Posterior vena cava (tissue), 2 donors: ENCODE measurements at regions of chr1 and their contacts with region 1.

Region 1: GRCh38 chr1:154558575-154559465 is at the start of gene UBE2Q1:
- DNase-seq: peak; percentile 100
- total RNA-seq, gene UBE2Q1: 44.8 to 45.4 TPM

Region 2: DNA sequence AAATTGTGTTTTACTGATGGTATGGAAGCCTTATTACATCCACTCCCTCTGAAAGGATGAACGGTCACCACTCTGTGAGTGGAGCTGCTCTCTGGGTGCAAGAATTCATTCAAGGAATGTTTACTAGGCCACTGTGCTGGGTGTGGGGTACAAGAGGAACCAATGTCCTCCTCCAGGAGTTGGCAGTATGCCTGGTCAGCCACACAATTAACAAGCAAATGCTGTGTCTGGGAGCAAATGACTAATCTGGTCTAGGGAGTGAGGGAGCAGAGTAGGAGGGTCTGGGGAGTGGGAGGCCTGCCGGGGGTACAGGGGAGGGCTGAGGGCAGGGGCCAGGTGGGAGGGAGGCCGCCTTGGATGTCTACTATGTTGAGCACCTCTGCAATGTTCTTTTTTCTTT is 84.0 kb before region 1 on chr1:
- intact Hi-C with region 1: loop called in 1 of 2 experiments (anchors 5 kb)
- DNase-seq: no peak

Region 3: GRCh38 chr1:154870115-154870571 is 311.3 kb after region 1 on chr1 and contains the start of gene KCNN3:
- intact Hi-C with region 1: loop called in 1 of 2 experiments (anchors 5 kb)
- DNase-seq: peak; percentile 96
- total RNA-seq, gene KCNN3: 1.9 to 2.0 TPM

Region 4: GRCh38 chr1:154884869-154885701 is 326.3 kb after region 1 on chr1:
- intact Hi-C with region 1: loop called in 1 of 2 experiments (anchors 10 kb)
- DNase-seq: no peak